ENCODE measurements at regions of chr11 and their contacts with region 1.

Region 1: DNA sequence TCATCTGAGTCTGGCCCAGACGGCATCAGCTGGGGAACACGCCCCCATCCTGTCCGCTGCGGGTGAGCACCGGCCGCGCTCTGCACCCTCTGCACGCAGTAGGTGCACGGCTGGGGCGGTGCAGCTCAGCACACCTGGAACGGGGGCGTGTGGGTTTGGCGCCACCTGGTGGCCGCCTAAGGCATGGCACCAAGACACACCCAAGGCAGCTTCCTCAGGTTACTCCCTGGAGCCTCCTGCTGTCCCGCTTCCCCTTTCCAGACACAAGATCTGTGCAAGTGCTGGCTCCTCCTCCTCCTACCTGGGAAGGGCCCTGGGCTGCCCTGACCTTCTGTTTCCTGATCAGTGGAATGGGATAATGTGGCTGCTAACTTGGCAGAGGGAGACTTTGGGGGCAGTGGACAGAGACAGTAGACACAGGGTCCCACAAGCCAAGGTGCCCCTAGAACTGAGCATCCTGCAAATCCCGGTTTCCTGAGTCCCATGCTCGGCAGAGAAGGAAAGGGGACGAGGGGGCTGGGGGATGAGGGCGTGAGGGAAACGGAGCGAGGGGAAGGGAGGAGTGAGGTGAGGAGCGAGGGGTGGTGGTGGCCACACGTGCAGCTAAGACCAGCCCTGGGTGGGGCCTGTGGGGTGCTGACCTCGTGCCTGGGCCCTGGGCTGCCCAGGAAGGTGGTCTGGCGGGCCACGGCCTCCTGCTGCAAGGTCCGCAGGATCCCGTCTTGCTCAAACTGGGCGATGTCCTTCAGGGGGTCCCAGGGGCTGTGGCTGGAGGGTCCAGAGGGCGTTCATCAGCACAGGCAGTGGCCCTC is 34.8 kb upstream of the CARS1 start:
- DNase-seq: peak; percentile 58 to 81 (median 65)
- H3K4me3 ChIP-seq: no peak overlapping the region
- H3K4me3 Mint-ChIP-seq: peak overlapping the region in 1 of 7 donors; percentile 34
- H3K27ac ChIP-seq: no peak overlapping the region
- H3K27ac Mint-ChIP-seq: peak overlapping the region in 1 of 8 donors; percentile 38
- H3K4me1 ChIP-seq: no peaks in the 10 kb centered on the region
- H3K4me1 Mint-ChIP-seq: peaks cover 0 to 3% (median 2%) of the 10 kb centered on the region in 3 donors
- H3K27me3 ChIP-seq: no peaks in the 10 kb centered on the region
- H3K27me3 Mint-ChIP-seq: peaks cover 3 to 6% of the 10 kb centered on the region in 2 donors

Region 2: GRCh38 chr11:2885676-2886081 is 206.3 kb before region 1 on chr11 and contains the start of gene CDKN1C:
- CTCF ChIA-PET with region 1: interaction called, 30 read pairs
- POLR2A ChIA-PET with region 1: no interaction called
- DNase-seq: peak; percentile 79 to 89 (median 85)
- H3K4me3 ChIP-seq: peak within 1 kb of the TSS; percentile 69
- H3K4me3 Mint-ChIP-seq: peak within 1 kb of the TSS; percentile 82 to 95 (median 89)
- H3K27ac ChIP-seq: peak within 1 kb of the TSS; percentile 24
- H3K27ac Mint-ChIP-seq: peak within 1 kb of the TSS in 7 of 8 donors; percentile 61 to 91 (median 74)
- H3K4me1 ChIP-seq: peaks cover 13% of the 10 kb centered on the region
- H3K4me1 Mint-ChIP-seq: peaks cover 9 to 27% (median 26%) of the 10 kb centered on the region in 3 donors
- H3K27me3 ChIP-seq: no peaks in the 10 kb centered on the region
- H3K27me3 Mint-ChIP-seq: no peaks in the 10 kb centered on the region
- total RNA-seq, gene CDKN1C: 1.0 to 1.1 TPM

Region 3: DNA sequence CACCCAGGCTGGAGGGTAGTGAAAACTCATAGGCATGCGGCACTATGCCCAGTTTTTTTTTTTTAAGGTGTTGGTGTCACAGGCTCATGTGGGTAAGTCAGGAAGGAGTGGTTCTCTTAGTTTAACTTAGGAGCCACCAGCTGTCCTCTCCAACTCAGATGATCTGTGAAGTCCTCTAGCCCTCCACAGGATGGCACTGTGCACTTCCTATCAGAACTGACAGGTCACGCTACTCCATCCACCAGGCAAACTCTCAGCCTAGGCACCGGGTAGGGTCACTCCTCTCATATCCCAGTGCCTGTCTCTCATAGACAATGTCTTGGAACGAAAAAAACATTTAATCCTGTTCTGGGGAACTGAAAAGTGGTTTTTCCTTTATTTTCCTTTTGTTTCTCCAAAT is 116.4 kb before region 1 on chr11:
- CTCF ChIA-PET with region 1: interaction called, 35 read pairs
- POLR2A ChIA-PET with region 1: interaction called, 3 read pairs
- DNase-seq: peak; percentile 20 to 70 (median 43)
- H3K4me3 ChIP-seq: no peak overlapping the region
- H3K4me3 Mint-ChIP-seq: peak overlapping the region in 1 of 7 donors; percentile 27
- H3K27ac ChIP-seq: no peak overlapping the region
- H3K27ac Mint-ChIP-seq: peak overlapping the region in 5 of 8 donors; percentile 17 to 78 (median 66)
- H3K4me1 ChIP-seq: peaks cover 10% of the 10 kb centered on the region
- H3K4me1 Mint-ChIP-seq: peaks cover 37 to 60% (median 47%) of the 10 kb centered on the region in 3 donors
- H3K27me3 ChIP-seq: no peaks in the 10 kb centered on the region
- H3K27me3 Mint-ChIP-seq: peaks cover 0 to 1% of the 10 kb centered on the region in 2 donors

Region 4: DNA sequence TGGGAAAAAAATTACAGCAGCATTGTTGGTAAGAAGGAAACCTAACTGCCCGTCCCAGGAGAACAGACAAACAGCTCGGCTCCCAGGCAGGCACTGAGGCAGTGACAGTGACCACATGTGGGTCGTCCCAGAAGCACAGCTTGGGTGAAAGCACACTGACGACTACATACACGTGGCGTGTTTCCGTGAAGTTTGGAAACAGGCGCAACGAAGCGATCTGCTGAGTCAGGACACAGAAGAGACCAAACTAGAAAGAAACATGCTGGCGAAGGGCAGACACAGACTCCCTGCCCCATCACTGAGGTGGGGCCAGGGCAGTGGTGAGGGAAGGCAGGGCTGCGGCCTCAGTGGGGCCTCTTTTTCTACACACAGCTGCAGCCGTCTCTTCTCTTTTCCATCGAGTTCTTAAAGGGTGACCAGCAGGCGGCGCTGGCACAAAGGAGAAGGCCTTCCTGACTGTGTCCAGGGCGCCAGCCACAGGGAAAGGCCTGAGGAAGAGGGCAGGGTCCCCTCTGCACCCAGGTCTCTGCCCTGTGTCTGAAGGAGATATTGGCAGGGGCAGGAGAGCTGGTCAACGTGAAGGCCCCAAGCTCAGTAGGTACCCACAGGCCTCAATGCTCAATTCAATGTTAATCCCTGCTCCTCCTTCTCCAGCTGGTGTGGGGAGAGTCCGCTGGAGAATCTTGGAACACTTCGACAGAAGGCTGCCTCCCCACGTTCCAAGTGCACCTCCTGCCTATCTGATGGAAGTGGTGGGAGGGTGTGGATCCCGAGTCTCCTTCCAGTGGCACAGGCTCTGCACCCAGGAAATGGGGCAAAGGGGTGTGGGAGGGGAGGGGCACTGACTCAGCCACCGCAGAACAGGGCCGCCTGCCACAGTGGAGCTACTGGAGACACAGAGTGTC is 54.7 kb before region 1 on chr11:
- CTCF ChIA-PET with region 1: interaction called, 20 read pairs
- POLR2A ChIA-PET with region 1: interaction called, 5 read pairs
- DNase-seq: peak in 4 of 5 donors; percentile 28 to 57 (median 33)
- H3K4me3 ChIP-seq: no peak overlapping the region
- H3K4me3 Mint-ChIP-seq: peak overlapping the region in 1 of 7 donors; percentile 65
- H3K27ac ChIP-seq: no peak overlapping the region
- H3K27ac Mint-ChIP-seq: peak overlapping the region in 6 of 8 donors; percentile 63 to 89 (median 74)
- H3K4me1 ChIP-seq: peaks cover 14% of the 10 kb centered on the region
- H3K4me1 Mint-ChIP-seq: peaks cover 24 to 25% (median 24%) of the 10 kb centered on the region in 3 donors
- H3K27me3 ChIP-seq: no peaks in the 10 kb centered on the region
- H3K27me3 Mint-ChIP-seq: no peaks in the 10 kb centered on the region

Region 5: DNA sequence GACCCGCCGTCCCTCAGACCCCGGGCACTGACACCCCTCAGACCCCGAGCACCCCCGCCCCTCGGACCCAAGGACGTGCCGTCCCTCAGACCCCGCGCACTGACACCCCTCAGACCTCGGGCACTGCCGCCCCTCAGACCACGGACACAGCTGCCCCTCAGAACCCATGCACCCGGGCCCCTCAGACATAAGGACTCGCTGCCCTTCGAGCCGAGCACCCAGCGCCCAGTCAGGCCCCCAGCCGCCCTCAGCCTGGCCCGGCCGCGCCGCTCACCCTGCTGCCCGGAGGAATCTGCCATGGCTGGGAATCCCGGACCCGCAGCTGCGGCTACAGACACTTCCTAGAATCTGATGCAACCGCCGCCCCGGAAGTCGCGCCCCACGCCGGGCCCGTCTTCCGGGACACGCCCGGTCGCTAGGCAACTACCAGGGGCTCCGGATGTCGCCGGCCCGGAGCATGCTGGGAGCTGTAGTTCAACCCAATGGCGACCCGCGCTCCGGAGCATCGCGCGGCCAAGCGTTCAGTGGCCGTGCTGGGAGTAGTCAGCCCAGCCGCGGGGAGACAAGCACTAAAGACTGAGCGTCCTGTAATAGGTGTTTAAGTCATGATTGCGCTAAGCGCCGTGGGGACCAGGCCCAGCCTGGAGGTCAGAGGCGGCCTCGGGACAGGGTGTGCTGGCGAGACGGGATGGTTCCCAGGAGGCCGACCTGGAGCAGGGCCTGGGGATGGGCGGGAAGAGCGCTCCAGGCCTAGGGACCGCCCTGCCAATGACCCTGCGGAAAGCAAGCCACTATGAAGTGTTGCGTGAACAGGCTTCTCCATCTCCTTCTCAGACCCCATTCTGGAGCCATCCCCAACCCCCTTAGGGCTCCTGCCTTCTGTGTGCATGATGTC is 34.7 kb before region 1 on chr11 and contains the start of gene CARS1:
- CTCF ChIA-PET with region 1: interaction called, 31 read pairs
- POLR2A ChIA-PET with region 1: no interaction called
- DNase-seq: peak; percentile 90 to 94 (median 92)
- H3K4me3 ChIP-seq: peak within 1 kb of the TSS; percentile 78
- H3K4me3 Mint-ChIP-seq: peak within 1 kb of the TSS; percentile 83 to 96 (median 88)
- H3K27ac ChIP-seq: peak within 1 kb of the TSS; percentile 90
- H3K27ac Mint-ChIP-seq: peak within 1 kb of the TSS; percentile 85 to 97 (median 90)
- H3K4me1 ChIP-seq: peaks cover 11% of the 10 kb centered on the region
- H3K4me1 Mint-ChIP-seq: peaks cover 23 to 46% (median 33%) of the 10 kb centered on the region in 3 donors
- H3K27me3 ChIP-seq: no peaks in the 10 kb centered on the region
- H3K27me3 Mint-ChIP-seq: peaks cover 0 to 7% of the 10 kb centered on the region in 2 donors
- total RNA-seq, gene CARS1: 81.2 to 83.3 TPM

Region 6: GRCh38 chr11:3121931-3122774 is 30.2 kb after region 1 on chr11:
- CTCF ChIA-PET with region 1: no interaction called
- POLR2A ChIA-PET with region 1: no interaction called
- DNase-seq: peak in 1 of 5 donors; percentile 39
- H3K4me3 ChIP-seq: no peak overlapping the region
- H3K4me3 Mint-ChIP-seq: no peak overlapping the region
- H3K27ac ChIP-seq: no peak overlapping the region
- H3K27ac Mint-ChIP-seq: no peak overlapping the region
- H3K4me1 ChIP-seq: no peaks in the 10 kb centered on the region
- H3K4me1 Mint-ChIP-seq: no peaks in the 10 kb centered on the region
- H3K27me3 ChIP-seq: no peaks in the 10 kb centered on the region
- H3K27me3 Mint-ChIP-seq: no peaks in the 10 kb centered on the region

Measured in CD8-positive, alpha-beta memory T cell (primary cell).